ENCODE measurements at regions of chr11 and their contacts with region 1.

Region 1: DNA sequence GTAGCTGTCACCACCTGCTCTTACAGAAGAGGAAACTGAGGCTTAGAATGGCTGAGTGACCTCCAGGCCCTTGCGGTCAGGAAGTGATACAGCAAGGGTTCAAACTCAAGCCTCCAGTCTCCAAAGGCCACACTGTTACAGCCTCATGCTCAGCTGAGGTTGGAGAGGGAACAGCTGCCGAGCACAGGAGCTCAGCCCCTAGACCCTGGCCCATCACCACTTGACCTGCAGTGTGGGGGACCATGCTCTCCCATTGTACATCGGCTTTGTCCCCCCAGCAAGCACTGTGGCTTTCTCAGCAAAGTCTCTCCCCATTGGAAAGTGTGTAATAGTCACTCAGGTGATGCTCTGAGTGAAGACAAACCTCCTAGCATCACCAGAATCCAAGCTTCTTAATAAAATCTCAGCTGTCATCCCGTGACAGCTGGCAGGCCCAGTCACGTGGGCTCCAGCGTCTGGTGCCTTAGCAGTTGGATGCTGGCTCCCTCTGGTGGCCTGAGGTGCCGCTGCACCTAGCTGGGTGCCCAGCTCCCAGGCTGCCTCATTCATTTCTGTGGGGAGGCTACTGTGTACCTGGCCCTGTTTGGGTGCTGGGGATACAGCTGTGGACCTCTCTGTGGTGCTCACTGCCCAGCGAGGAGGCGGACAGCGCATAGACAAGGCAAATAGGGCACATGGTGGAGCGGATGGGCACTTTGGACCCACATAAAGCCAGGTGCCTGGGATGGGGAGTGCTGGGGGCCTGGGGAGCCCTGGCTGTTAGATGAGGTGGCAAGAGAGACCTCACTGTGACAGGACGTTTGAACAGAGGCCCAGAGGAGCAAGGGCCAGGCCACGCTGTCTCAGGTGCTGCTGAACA is 19.1 kb upstream of the MYRF start:
- DNase-seq: peak; percentile 79 to 92 (median 87)
- H3K4me3 ChIP-seq: no peak overlapping the region
- H3K27ac ChIP-seq: no peak overlapping the region
- H3K4me1 ChIP-seq: no peaks in the 10 kb centered on the region
- H3K27me3 ChIP-seq: no peaks in the 10 kb centered on the region

Region 2: DNA sequence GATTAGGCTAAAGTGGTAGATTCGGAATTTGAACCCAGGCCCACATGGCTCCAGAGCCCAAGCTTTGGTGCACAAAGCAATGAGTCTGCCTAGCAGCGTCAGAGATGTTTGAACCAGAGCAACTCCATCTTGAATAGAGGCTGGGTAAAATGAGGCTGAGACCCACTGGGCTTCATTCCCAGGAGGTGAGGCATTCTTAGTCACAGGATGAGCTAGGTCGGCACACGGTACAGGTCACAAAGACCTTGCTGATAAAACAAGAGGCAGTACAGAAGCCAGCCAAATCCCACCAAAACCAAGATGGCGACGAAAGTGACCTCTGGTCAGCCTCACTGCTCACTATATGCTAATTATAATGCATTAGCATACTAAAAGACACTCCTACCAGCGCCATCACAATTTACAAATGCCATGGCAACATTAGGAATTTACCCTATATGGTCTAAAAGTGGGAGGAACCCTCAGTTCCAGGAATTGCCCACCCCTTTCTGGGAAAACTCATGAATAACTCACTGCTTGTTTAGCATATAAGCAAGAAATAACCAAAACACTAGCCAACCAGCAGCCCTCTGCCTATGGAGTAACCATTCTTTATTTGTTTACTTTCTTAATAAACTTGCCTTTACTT is 93.4 kb before region 1 on chr11:
- CTCF ChIA-PET with region 1: interaction called, 21 read pairs
- POLR2A ChIA-PET with region 1: no interaction called
- DNase-seq: no peak
- H3K4me3 ChIP-seq: no peak overlapping the region
- H3K27ac ChIP-seq: no peak overlapping the region
- H3K4me1 ChIP-seq: no peaks in the 10 kb centered on the region
- H3K27me3 ChIP-seq: peaks cover 0 to 4% (median 3%) of the 10 kb centered on the region in 5 experiments

Region 3: GRCh38 chr11:61679893-61680621 is 53.3 kb before region 1 on chr11 and contains the start of gene DAGLA:
- CTCF ChIA-PET with region 1: interaction called, 16 read pairs
- POLR2A ChIA-PET with region 1: no interaction called
- DNase-seq: peak; percentile 54 to 77 (median 76)
- H3K4me3 ChIP-seq: peak within 1 kb of the TSS; percentile 5 to 70 (median 44)
- H3K27ac ChIP-seq: no peak within 1 kb of the TSS
- H3K4me1 ChIP-seq: peaks cover 0 to 29% (median 18%) of the 10 kb centered on the region in 4 experiments
- H3K27me3 ChIP-seq: peaks cover 3 to 67% (median 43%) of the 10 kb centered on the region in 5 experiments

Region 4: DNA sequence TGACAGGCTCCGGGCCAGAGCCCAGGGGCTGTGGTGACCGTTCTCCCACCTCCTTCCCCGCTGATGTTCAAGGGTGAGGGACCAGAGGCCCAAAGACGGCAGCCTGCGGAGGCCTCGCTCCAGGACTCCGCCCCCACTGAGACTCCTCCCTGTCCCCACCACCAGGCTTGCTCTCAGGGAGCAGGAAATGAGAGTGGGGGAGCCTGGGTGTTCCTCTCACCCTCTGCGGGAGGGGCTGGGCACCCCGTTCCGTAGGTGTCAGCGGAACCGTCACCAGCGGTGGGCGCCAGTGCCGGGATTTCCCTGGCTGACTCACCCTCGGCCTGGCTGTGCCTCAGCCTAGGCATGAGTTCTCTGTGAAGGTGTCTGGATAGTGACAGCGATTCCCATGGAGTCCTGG is 37.4 kb before region 1 on chr11:
- CTCF ChIA-PET with region 1: interaction called, 17 read pairs
- POLR2A ChIA-PET with region 1: no interaction called
- DNase-seq: peak; percentile 88 to 98 (median 97)
- H3K4me3 ChIP-seq: peak overlapping the region in 3 of 7 experiments; percentile 38 to 53 (median 46)
- H3K27ac ChIP-seq: peak overlapping the region; percentile 33 to 68
- H3K4me1 ChIP-seq: peaks cover 7 to 69% (median 47%) of the 10 kb centered on the region in 4 experiments
- H3K27me3 ChIP-seq: no peaks in the 10 kb centered on the region

Region 5: GRCh38 chr11:61707574-61707973 is 25.8 kb before region 1 on chr11:
- CTCF ChIA-PET with region 1: interaction called, 12 read pairs
- POLR2A ChIA-PET with region 1: no interaction called
- DNase-seq: no peak
- H3K4me3 ChIP-seq: no peak overlapping the region
- H3K27ac ChIP-seq: no peak overlapping the region
- H3K4me1 ChIP-seq: peaks cover 0 to 7% (median 6%) of the 10 kb centered on the region in 4 experiments
- H3K27me3 ChIP-seq: no peaks in the 10 kb centered on the region

Region 6: DNA sequence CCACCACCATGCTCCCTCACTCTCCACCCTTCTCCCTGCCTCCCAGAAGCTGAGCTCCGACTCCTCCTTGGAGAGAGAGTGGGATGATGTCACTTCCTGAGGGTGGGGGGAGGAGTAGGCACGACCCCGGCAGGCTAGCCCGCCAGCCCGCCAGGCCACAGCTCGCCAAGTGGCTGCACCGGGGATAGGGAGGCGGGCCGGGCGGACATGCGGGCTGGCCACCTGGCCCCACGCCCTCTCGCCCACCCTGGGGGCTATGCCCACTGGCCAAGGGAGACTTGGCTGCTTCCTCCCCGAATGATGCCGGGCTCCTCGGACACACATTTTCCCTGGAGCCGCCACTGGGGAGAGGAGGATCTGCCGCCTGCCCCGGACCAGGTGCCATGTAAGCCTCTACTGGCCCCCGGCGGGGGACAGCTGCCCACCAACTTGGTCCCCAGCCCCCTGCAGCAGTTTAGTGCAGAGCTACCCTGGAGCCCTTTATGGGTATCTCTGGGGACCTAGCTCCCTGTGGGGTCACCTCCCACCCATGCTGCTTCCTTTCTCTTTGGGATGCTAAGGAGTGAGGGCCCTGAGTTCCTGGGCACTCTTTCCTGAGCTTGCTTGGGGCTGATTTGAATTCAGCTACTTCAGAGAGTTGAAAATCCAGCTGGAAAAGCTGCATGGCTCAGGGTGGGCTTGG is 14.6 kb before region 1 on chr11:
- CTCF ChIA-PET with region 1: interaction called, 45 read pairs
- POLR2A ChIA-PET with region 1: no interaction called
- DNase-seq: peak in 2 of 3 donors; percentile 35 to 44
- H3K4me3 ChIP-seq: no peak overlapping the region
- H3K27ac ChIP-seq: no peak overlapping the region
- H3K4me1 ChIP-seq: peaks cover 0 to 15% (median 9%) of the 10 kb centered on the region in 4 experiments
- H3K27me3 ChIP-seq: no peaks in the 10 kb centered on the region

Region 7: GRCh38 chr11:61747192-61747966 is 14.0 kb after region 1 on chr11:
- CTCF ChIA-PET with region 1: interaction called, 23 read pairs
- POLR2A ChIA-PET with region 1: no interaction called
- DNase-seq: peak in 2 of 3 donors; percentile 37 to 43
- H3K4me3 ChIP-seq: no peak overlapping the region
- H3K27ac ChIP-seq: no peak overlapping the region
- H3K4me1 ChIP-seq: peaks cover 0 to 4% (median 3%) of the 10 kb centered on the region in 4 experiments
- H3K27me3 ChIP-seq: peaks cover 0 to 12% (median 2%) of the 10 kb centered on the region in 5 experiments

Region 8: DNA sequence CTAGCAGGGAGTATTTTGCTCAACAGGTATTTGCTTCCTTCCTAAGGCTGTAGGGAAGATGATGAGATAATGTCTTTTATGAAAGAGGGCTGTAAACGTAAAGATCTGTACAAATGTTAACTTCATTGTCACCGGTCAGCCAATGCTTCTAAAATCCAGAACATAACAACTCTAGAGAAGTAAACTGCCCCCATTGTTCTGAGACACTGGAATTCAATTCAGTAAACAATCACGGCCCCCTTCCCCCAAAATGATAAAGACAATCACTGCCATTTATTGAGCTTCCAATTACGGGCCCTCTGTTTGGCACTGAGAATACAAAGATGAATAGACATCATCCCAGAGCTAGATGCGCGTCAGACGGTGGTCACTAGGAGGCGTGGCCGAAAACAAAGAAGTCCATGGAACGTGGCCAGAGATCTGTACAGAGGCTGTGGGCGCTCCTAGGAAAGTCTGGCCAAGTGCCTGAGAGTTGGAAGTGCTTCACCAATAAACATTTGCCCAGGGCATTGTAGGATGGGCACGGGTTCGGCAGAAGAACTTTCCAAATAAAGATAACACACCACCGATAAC is 58.5 kb after region 1 on chr11:
- CTCF ChIA-PET with region 1: no interaction called
- POLR2A ChIA-PET with region 1: no interaction called
- DNase-seq: peak; percentile 70 to 83 (median 78)
- H3K4me3 ChIP-seq: peak overlapping the region; percentile 48 to 94 (median 84)
- H3K27ac ChIP-seq: peak overlapping the region; percentile 99
- H3K4me1 ChIP-seq: peaks cover 11 to 29% (median 24%) of the 10 kb centered on the region in 4 experiments
- H3K27me3 ChIP-seq: no peaks in the 10 kb centered on the region

Region 9: DNA sequence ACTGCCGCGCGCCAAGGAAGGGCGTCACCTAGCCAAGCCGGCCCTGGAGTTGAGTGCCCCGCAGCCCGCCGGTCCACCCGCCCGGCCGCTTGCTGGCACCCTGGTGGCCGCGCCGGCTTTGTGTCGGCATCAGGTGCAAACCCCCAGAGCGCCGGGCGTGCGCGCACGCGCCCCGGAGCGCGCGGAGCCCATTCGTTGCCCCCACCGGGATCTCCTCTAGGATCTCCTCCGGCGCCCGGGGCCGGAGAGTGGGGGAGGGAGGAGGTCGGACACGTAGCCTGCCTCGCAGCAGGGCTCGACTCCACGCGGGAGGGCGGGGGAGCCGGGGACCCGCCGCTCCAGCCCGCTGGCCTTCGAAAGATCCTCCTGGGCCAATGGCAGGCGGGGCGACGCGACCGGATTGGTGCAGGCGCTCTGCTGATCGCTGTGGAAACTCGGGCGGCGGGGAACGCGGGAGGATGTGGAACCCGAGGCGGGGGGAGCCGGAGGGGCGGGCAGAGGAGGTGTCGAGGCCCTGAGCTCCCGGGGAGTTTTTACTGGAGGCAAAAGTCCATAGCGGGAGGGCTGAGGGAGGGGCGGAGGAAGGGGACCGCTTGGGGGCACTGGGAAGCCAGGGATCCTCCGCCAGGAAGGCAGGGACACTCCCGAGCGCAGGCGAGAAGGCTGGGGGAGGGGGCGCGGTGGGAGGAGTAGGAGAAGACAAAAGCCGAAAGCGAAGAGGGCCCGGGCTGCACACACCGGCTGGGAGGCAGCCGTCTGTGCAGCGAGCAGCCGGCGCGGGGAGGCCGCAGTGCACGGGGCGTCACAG is 94.4 kb after region 1 on chr11 and contains the start of gene FADS2:
- CTCF ChIA-PET with region 1: no interaction called
- POLR2A ChIA-PET with region 1: no interaction called
- DNase-seq: peak; percentile 81 to 92 (median 89)
- H3K4me3 ChIP-seq: peak within 1 kb of the TSS; percentile 53 to 97 (median 84)
- H3K27ac ChIP-seq: peak within 1 kb of the TSS; percentile 64 to 79
- H3K4me1 ChIP-seq: peaks cover 24 to 61% (median 54%) of the 10 kb centered on the region in 4 experiments
- H3K27me3 ChIP-seq: no peaks in the 10 kb centered on the region